Naive thymus-derived CD8-positive, alpha-beta T cell (primary cell): ENCODE measurements at regions of chr4 and their contacts with region 1.

Region 1: DNA sequence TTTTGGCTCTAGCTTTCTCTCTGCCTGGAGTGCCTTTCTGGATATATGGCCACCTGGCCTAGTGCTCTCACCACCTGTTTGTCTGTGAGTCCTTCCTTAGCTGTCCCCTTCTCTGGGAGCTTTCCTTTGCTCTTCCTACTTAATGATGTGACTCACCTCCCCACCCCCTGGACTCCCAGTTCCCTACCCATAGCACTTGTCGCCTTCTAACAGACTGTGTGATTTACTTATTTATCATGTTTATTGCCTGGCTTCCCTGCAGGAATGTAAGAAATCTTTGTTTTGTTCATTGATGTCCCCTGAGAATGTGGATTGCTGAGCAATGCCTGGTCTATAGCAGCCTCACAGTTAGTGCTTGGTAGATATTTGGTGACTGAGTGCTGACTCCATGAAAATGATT is 18.9 kb downstream of the ADD1 start:
- DNase-seq: no peak
- ATAC-seq: no peak
- H3K4me3 Mint-ChIP-seq: peak overlapping the region in 6 of 10 donors; percentile 0 to 38 (median 12)
- H3K27ac Mint-ChIP-seq: peak overlapping the region in 7 of 10 donors; percentile 2 to 80 (median 35)
- H3K4me1 Mint-ChIP-seq: peaks cover 43 to 86% (median 85%) of the 10 kb centered on the region in 4 donors
- H3K27me3 Mint-ChIP-seq: no peaks in the 10 kb centered on the region

Region 2: GRCh38 chr4:2852481-2852921 is 10.0 kb before region 1 on chr4:
- POLR2A ChIA-PET with region 1: interaction called, 13 read pairs
- DNase-seq: peak in 3 of 10 donors; percentile 51 to 54 (median 51)
- ATAC-seq: peak; percentile 68 to 79
- H3K4me3 Mint-ChIP-seq: peak overlapping the region; percentile 64 to 85 (median 77)
- H3K27ac Mint-ChIP-seq: peak overlapping the region; percentile 91 to 96 (median 93)
- H3K4me1 Mint-ChIP-seq: peaks cover 32 to 88% (median 80%) of the 10 kb centered on the region in 4 donors
- H3K27me3 Mint-ChIP-seq: no peaks in the 10 kb centered on the region